ENCODE measurements at regions of chr15 and their contacts with region 1.

Region 1: GRCh38 chr15:36511594-36511993 is 67.8 kb upstream of the CDIN1 start:
- DNase-seq: no peak
- H3K4me3 ChIP-seq: no peak overlapping the region
- H3K27ac ChIP-seq: no peak overlapping the region
- H3K27me3 ChIP-seq: no peaks in the 10 kb centered on the region
- CTCF ChIP-seq: no peak

Region 2: DNA sequence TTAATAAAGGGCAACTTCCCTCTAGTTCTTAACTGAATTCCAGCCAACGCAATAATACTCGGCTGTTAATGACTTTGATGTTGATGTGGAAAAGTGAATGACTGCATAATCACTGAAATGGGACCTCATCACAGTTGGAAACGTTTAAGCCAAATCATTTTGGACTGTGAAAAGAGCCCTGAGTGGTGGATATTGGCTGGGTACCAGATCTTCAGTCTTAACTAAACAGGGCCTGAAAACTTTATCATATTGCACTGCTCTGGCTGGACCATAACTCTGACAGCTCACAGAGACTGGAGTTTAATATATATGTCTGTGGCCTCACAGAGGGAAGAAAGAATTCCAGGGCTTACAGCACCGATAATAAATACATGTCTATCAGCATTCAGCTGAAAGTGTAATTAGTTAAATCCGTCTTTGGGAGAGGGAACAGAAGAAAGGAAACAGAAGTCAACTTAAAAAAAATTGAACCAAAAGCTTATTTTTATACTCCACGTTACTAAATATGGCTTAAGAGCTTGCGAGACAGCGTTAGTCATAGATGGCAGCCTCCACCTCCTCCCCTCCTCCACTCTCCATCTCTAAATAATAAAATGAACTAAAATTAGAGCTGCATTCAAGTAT is 154.5 kb before region 1 on chr15:
- CTCF ChIA-PET with region 1: no interaction called
- POLR2A ChIA-PET with region 1: no interaction called
- DNase-seq: peak; percentile 32
- H3K4me3 ChIP-seq: peak overlapping the region; percentile 17; the same call in 1 of the 2 replicates
- H3K27ac ChIP-seq: peak overlapping the region; percentile 92
- H3K27me3 ChIP-seq: no peaks in the 10 kb centered on the region
- CTCF ChIP-seq: no peak

Region 3: GRCh38 chr15:36501063-36501678 is 10.4 kb before region 1 on chr15:
- CTCF ChIA-PET with region 1: interaction called, 14 read pairs
- POLR2A ChIA-PET with region 1: no interaction called
- DNase-seq: peak; percentile 33
- H3K4me3 ChIP-seq: no peak overlapping the region
- H3K27ac ChIP-seq: no peak overlapping the region
- H3K27me3 ChIP-seq: no peaks in the 10 kb centered on the region
- CTCF ChIP-seq: peak; percentile 72

Measured in AG04450 (cell line).